CD4-positive, alpha-beta memory T cell (primary cell): ENCODE measurements at regions of chr5 and their contacts with region 1.

Region 1: DNA sequence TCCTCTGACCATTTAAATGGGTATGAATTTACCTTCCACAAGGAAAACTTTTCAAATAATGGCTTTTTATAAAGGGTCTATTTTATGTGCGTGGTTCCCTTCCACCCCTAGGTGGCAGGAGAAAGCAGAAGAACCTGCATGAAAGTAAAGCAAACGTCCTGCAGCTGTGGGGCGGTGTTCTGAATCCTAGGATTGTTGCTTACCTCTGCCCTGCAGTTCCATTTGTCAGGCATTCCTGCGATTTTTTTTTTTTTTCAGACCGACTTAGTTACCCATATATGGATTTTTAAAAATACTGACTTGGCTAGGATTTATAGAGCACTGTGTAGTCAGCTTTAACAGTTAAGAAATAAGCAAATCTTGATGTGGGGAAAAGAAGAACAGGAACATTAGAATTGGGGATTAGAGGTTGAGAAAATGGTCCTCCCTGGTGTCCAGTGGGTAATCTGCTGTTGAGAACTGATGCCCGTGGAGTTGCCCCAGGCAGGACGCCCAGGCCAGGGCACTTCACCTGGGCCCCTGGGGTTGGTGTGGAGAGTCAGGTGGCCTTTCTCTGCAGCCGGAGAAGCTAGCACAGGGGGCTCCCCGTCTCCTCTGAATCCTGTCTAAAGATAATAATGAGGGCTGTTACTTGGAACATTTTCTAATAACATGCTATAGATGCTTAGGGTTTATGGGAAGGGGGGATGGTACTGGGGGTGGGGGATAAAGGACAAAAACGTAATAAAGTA is 30.4 kb upstream of the LTC4S start:
- DNase-seq: peak; percentile 42 to 70 (median 51)
- H3K4me3 ChIP-seq: no peak overlapping the region
- H3K4me3 Mint-ChIP-seq: no peak overlapping the region
- H3K27ac ChIP-seq: no peak overlapping the region
- H3K27ac Mint-ChIP-seq: peak overlapping the region in 5 of 7 donors; percentile 24 to 60 (median 50)
- H3K4me1 ChIP-seq: peaks cover 48% of the 10 kb centered on the region
- H3K4me1 Mint-ChIP-seq: peaks cover 35 to 69% (median 48%) of the 10 kb centered on the region in 4 donors
- H3K27me3 ChIP-seq: no peaks in the 10 kb centered on the region
- H3K27me3 Mint-ChIP-seq: no peaks in the 10 kb centered on the region

Region 2: DNA sequence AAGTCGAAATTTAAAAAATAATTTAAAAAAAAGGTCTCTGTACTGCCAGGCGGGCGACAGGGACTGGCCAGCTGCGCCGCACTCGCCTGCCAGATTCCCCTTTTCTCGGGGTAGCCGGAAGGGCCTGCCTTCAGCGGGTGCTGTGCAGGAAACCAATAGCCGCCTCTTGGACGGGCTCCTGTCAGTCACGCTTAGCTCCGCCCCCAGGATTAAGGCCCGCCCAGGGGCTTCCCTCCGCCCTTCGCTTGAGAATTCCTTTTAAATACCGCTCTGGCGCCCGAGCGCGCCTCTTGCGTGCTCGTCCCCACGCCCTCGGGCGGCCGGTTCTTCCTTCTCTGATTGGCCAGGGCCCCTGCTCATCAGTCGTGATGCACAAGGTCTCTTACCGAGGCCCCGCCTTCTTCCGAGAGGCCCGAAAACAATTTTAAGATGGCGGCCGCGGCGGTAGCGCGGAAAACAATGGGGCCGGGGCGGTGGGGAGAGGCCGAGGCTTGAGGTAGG is 30.9 kb before region 1 on chr5 and contains the start of gene MAML1:
- CTCF ChIA-PET with region 1: interaction called, 12 read pairs
- POLR2A ChIA-PET with region 1: interaction called, 18 read pairs
- intact Hi-C with region 1: no loop called
- DNase-seq: peak; percentile 99 to 100 (median 99)
- H3K4me3 ChIP-seq: peak within 1 kb of the TSS; percentile 53 to 62
- H3K4me3 Mint-ChIP-seq: peak within 1 kb of the TSS; percentile 92 to 97 (median 95)
- H3K27ac ChIP-seq: peak within 1 kb of the TSS; percentile 96
- H3K27ac Mint-ChIP-seq: peak within 1 kb of the TSS; percentile 92 to 99 (median 96)
- H3K4me1 ChIP-seq: peaks cover 44% of the 10 kb centered on the region
- H3K4me1 Mint-ChIP-seq: peaks cover 25 to 51% (median 37%) of the 10 kb centered on the region in 4 donors
- H3K27me3 ChIP-seq: no peaks in the 10 kb centered on the region
- H3K27me3 Mint-ChIP-seq: no peaks in the 10 kb centered on the region
- total RNA-seq, gene MAML1: 52.4 to 56.5 TPM

Region 3: GRCh38 chr5:179749857-179750508 is 13.4 kb before region 1 on chr5:
- CTCF ChIA-PET with region 1: interaction called, 13 read pairs
- POLR2A ChIA-PET with region 1: interaction called, 3 read pairs
- intact Hi-C with region 1: no loop called
- DNase-seq: no peak
- H3K4me3 ChIP-seq: no peak overlapping the region
- H3K4me3 Mint-ChIP-seq: no peak overlapping the region
- H3K27ac ChIP-seq: no peak overlapping the region
- H3K27ac Mint-ChIP-seq: peak overlapping the region in 3 of 7 donors; percentile 41 to 61 (median 45)
- H3K4me1 ChIP-seq: peaks cover 22% of the 10 kb centered on the region
- H3K4me1 Mint-ChIP-seq: peaks cover 27 to 67% (median 40%) of the 10 kb centered on the region in 4 donors
- H3K27me3 ChIP-seq: no peaks in the 10 kb centered on the region
- H3K27me3 Mint-ChIP-seq: no peaks in the 10 kb centered on the region

Region 4: GRCh38 chr5:179795863-179796833 is 32.8 kb after region 1 on chr5:
- CTCF ChIA-PET with region 1: interaction called, 53 read pairs
- POLR2A ChIA-PET with region 1: interaction called, 11 read pairs
- intact Hi-C with region 1: loop called (anchors 1 kb)
- DNase-seq: peak; percentile 61 to 77 (median 68)
- H3K4me3 ChIP-seq: peak overlapping the region; percentile 23 to 69
- H3K4me3 Mint-ChIP-seq: peak overlapping the region; percentile 50 to 79 (median 64)
- H3K27ac ChIP-seq: peak overlapping the region; percentile 44
- H3K27ac Mint-ChIP-seq: peak overlapping the region in 6 of 7 donors; percentile 11 to 89 (median 57)
- H3K4me1 ChIP-seq: peaks cover 25% of the 10 kb centered on the region
- H3K4me1 Mint-ChIP-seq: peaks cover 11 to 51% (median 27%) of the 10 kb centered on the region in 4 donors
- H3K27me3 ChIP-seq: no peaks in the 10 kb centered on the region
- H3K27me3 Mint-ChIP-seq: no peaks in the 10 kb centered on the region

Region 5: DNA sequence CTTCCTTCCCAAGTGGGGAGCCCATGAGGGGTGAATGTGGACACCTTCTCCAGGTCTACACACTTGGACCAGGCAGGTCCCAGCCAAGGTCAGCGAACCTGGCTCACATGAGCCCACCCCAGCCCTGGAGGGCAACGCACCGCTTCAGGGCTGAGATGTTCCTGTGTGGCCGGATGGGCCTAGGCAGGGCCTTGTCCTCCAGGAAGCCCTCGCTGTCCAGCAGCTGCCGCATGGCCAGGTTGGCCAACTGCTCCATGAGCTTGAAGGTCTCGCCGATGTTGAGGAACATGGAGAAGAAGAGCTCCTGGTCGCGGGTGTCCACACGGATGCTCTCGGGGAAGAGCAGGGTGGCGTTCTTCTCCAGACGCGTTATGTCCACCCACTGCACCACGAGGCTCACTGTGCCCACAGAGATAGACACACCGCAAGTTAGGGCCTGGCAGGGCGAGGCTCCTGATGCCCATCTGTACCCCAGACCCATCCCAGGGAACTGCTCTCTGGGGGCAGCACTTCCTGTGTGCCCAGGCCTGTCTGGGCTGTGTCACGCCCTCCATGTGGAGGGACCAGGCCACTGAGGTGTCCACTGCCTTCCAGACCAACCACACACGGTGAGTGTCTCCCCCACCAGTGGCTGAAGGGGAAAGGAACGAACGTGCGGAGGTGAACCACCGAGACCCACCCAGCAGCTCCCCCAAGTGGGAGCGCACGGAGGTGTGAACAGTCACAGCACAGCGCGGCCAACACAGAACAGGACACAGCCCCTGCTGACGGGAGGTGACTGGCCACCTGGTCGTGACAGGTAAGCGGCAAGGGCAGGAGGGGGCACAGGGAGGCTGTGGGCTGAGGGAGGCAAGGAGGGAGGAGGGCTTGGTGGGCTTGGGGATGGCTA is 129.9 kb after region 1 on chr5:
- CTCF ChIA-PET with region 1: no interaction called
- POLR2A ChIA-PET with region 1: no interaction called
- intact Hi-C with region 1: no loop called
- DNase-seq: no peak
- H3K4me3 ChIP-seq: no peak overlapping the region
- H3K4me3 Mint-ChIP-seq: no peak overlapping the region
- H3K27ac ChIP-seq: no peak overlapping the region
- H3K27ac Mint-ChIP-seq: no peak overlapping the region
- H3K4me1 ChIP-seq: no peaks in the 10 kb centered on the region
- H3K4me1 Mint-ChIP-seq: no peaks in the 10 kb centered on the region
- H3K27me3 ChIP-seq: no peaks in the 10 kb centered on the region
- H3K27me3 Mint-ChIP-seq: no peaks in the 10 kb centered on the region

Region 6: GRCh38 chr5:179907570-179908324 is 144.4 kb after region 1 on chr5 and contains the start of gene TBC1D9B:
- CTCF ChIA-PET with region 1: interaction called, 33 read pairs
- POLR2A ChIA-PET with region 1: interaction called, 4 read pairs
- intact Hi-C with region 1: loop called (anchors 1 kb)
- DNase-seq: peak; percentile 76 to 82 (median 78)
- H3K4me3 ChIP-seq: peak within 1 kb of the TSS in 1 of 2 donors; percentile 57
- H3K4me3 Mint-ChIP-seq: peak within 1 kb of the TSS; percentile 85 to 92 (median 88)
- H3K27ac ChIP-seq: peak within 1 kb of the TSS; percentile 54
- H3K27ac Mint-ChIP-seq: peak within 1 kb of the TSS; percentile 78 to 94 (median 84)
- H3K4me1 ChIP-seq: peaks cover 23% of the 10 kb centered on the region
- H3K4me1 Mint-ChIP-seq: peaks cover 7 to 38% (median 15%) of the 10 kb centered on the region in 4 donors
- H3K27me3 ChIP-seq: no peaks in the 10 kb centered on the region
- H3K27me3 Mint-ChIP-seq: no peaks in the 10 kb centered on the region
- total RNA-seq, gene TBC1D9B: 84.3 to 85.0 TPM